ENCODE measurements at regions of chr11 and their contacts with region 1.

Region 1: GRCh38 chr11:61392981-61393595 is 701 bp downstream of the TMEM216 start:
- DNase-seq: no peak
- H3K4me3 ChIP-seq: peak overlapping the region; percentile 86
- CTCF ChIP-seq: peak; percentile 34

Region 2: DNA sequence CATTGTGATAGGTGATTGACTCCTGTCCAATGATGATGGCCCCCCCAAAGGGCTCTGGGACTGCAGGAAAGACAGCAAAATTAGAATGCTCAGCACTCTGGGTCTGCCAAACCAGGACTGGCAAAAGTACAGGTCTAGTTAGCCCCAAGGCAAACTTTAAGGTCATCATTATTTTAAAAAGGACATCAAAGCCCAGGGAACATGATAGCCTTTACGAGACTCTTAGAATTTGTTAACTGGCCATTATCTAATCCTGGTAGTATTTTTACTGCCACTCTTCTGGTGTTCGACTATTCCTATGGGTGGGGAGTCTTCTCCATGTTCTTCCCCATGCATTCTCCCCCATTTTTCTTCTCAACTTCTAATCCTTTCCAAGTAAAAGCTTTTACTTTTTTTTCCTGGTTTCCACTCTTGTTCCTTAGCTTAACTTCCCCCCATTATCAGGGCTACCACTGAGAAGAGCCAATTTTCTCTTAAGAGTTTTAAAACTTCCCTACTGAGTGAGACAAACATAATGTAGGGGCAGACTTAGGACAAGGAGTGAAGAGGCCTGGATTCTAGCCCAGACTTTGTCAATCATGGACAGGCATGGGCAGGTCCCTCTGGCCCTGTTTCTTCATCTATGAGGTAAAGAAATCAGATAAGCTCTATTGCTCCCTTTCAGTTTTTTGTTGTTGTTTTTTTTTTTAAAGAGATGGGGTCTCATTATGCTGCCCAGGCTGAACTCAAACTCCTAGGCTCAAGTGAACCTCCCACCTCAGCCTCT is 67.3 kb before region 1 on chr11:
- CTCF ChIA-PET with region 1: interaction called, 150 read pairs
- POLR2A ChIA-PET with region 1: no interaction called
- DNase-seq: no peak
- H3K4me3 ChIP-seq: no peak overlapping the region
- CTCF ChIP-seq: no peak

Region 3: GRCh38 chr11:61332797-61333549 is 60.1 kb before region 1 on chr11 and contains the starts of genes DDB1 and TKFC:
- CTCF ChIA-PET with region 1: interaction called, 926 read pairs
- POLR2A ChIA-PET with region 1: interaction called, 3 read pairs
- DNase-seq: no peak
- H3K4me3 ChIP-seq: peak within 1 kb of the TSS; percentile 95
- CTCF ChIP-seq: no peak

Region 4: DNA sequence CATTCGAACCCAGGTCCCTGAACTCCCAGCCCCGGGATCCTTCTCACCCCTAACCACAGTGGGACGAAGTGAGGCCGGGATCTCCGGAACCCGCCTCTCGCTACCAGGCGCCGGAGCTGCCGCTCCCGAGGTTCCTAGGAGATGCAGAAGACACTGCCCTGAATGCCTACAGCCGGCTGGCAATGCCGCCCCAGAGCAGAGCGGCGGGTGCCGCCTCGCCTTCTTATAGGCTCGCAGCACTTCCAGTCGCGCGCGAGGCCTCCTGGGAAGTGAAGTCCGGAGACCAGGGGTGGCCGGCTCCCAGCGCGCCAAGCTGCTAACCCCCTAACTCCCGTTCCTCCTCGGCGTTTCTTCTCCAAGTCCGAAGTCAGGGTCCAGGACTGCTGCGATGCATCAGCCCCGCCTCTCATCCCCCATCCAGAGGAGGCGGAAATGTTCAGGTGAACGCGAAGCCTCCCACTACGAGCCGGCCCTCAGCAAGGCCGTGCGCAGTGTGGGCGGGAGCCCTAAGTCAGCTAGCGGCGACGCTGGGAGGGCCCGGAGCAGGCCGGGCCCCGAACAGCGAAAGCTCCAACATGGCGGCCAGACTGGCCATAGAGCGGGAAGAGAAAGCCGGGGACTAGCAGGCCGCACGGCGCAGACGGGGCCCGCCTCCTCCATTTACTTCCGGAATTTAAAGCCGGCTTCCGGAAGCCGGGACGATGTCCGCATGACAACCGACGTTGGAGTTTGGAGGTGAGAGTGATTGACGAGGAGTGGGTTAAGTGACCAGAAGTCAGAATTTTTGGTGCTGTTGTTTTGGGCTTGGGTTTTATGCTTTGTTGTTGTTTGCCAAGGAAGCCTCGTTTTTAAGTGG is 31.2 kb before region 1 on chr11 and contains the starts of genes CYB561A3 and TMEM138:
- CTCF ChIA-PET with region 1: interaction called, 239 read pairs
- POLR2A ChIA-PET with region 1: interaction called, 13 read pairs
- DNase-seq: peak; percentile 68
- H3K4me3 ChIP-seq: peak within 1 kb of the TSS; percentile 69
- CTCF ChIP-seq: no peak

Region 5: GRCh38 chr11:61378713-61379313 is 14.3 kb before region 1 on chr11:
- CTCF ChIA-PET with region 1: interaction called, 37 read pairs
- POLR2A ChIA-PET with region 1: interaction called, 4 read pairs
- DNase-seq: peak; percentile 92
- H3K4me3 ChIP-seq: no peak overlapping the region
- CTCF ChIP-seq: no peak

Region 6: DNA sequence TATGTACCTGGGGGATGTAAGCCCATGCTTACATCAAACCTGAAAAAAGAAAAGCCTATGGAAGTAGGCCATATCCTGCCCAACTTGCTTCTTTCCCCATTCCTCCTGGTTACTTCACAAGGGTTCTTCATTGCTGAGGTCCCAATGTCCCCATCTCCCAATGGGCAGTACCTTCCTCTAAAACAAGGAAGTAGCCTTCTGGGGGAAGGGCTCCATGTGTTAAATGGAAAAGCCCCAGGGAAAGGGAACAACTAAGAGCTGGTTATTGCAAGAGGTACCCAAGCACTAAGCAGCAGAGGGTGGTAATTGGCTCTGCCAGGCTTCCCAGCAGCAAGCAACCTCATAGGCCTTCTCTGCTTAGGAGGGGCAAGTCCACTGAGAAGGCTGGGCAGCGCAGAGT is 10.6 kb after region 1 on chr11:
- CTCF ChIA-PET with region 1: interaction called, 17 read pairs
- POLR2A ChIA-PET with region 1: interaction called, 3 read pairs
- DNase-seq: no peak
- H3K4me3 ChIP-seq: no peak overlapping the region
- CTCF ChIP-seq: no peak

Region 7: DNA sequence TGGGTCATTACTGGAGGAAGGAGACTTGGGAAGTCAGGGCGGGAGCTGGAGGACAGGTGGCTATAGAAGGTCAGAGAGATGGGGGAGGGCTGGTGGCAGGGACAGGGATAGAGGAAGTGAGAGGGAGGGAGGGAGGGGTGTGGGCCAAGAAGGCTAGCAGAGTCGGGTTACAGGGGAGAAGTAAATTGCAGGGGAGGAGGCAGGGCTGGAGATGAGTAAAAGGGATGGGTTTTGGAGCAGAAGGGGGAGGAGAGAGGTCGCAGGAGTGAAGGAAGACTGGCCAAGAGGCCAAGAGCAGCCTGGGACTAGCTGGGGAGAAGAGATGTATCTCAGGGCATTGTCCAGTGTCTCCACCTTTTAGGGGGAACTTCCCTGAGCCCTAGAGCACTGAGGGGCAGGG is 148.5 kb after region 1 on chr11:
- CTCF ChIA-PET with region 1: no interaction called
- POLR2A ChIA-PET with region 1: no interaction called
- DNase-seq: no peak
- H3K4me3 ChIP-seq: no peak overlapping the region
- CTCF ChIP-seq: no peak

Measured in AG04449 (cell line).